Activated T-helper 1 cell treated with anti-CD3 and anti-CD28 coated beads, Interleukin-12 subunit alpha, Interleukin-12 subunit beta, Interleukin-2, Interleukin-4 antibody, amounts not matched to agents 30 ng/mL and 10 ng/mL and 1 ng/mL, durations not matched to agents 14 hours and 24 hours and 36 hours (primary cell): ENCODE measurements at regions of chr3 and their contacts with region 1.

Region 1: GRCh38 chr3:194671900-194672808 is at the start of gene LSG1:
- DNase-seq: peak; percentile 84
- H3K4me3 Mint-ChIP-seq: peak within 1 kb of the TSS; percentile 99
- H3K27ac Mint-ChIP-seq: peak within 1 kb of the TSS; percentile 97
- H3K4me1 Mint-ChIP-seq: peaks cover 68% of the 10 kb centered on the region
- H3K27me3 Mint-ChIP-seq: peaks cover 3% of the 10 kb centered on the region
- total RNA-seq, gene LSG1: 65.1 and 66.3 TPM in 2 replicates

Region 2: GRCh38 chr3:194458131-194458530 is 214.0 kb before region 1 on chr3:
- intact Hi-C with region 1: no loop called
- DNase-seq: no peak
- H3K4me3 Mint-ChIP-seq: no peak overlapping the region
- H3K27ac Mint-ChIP-seq: no peak overlapping the region
- H3K4me1 Mint-ChIP-seq: no peaks in the 10 kb centered on the region
- H3K27me3 Mint-ChIP-seq: no peaks in the 10 kb centered on the region

Region 3: DNA sequence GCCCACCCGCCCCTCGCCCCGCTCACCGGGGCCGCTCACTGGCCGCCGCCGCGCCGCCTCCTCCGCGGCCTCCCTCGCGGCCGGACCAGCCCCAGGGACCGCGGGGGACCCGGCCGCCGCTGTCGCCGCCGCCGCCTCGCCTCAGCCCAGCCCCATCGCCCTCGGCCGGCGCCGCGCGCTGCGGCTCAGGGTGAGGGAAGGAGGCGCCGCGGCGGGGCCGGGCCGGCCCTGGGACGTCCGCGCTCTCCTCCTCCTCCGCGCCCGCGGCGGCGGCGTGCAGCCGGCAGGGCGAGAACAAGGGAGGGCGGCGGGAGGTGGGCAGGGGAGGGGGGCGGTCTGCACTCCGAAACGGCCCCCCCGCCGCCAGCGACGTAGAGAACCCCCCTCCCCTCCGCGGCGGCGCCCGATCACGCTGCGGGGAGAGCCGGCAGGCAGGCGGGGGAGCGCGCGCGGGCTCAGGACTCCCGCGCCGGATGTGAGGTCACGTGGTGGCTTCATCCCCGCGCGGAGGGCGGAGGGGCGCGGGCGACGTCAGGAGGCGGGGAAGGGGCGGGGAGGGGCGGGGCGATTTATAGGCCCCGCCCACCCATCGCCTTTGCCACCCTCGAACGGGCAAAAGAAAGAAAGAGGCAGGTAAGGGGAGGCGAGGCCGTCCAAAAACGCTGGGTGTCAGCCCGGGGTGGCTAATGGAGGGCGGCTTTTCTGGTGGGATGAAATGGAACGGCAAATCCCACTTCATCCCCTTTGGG is 185.4 kb before region 1 on chr3 and contains the start of gene ATP13A3:
- intact Hi-C with region 1: loop called (anchors 5 kb)
- DNase-seq: peak; percentile 87
- H3K4me3 Mint-ChIP-seq: peak within 1 kb of the TSS; percentile 96
- H3K27ac Mint-ChIP-seq: peak within 1 kb of the TSS; percentile 95
- H3K4me1 Mint-ChIP-seq: peaks cover 55% of the 10 kb centered on the region
- H3K27me3 Mint-ChIP-seq: peaks cover 1% of the 10 kb centered on the region
- total RNA-seq, gene ATP13A3: 198 and 206 TPM in 2 replicates

Region 4: DNA sequence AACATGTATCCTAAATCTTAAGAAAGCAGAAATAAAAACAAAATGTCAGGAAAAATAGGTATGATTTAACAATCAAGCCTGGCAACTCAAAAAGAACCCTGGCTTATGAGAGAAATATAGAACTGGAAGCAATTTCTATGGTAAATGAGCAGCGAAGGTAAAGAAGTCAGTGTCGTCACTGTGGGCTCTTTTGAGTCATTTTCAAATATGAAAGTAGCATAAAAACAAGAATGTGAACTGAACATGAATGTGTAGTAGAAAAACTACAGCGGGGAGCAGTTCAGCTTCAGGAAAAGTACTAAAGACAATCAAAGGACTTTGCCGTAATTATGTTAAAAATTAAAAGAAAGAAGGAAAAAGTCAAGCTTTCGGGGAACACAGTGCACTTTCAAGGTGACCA is 17.7 kb before region 1 on chr3:
- intact Hi-C with region 1: loop called (anchors 1 kb)
- DNase-seq: no peak
- H3K4me3 Mint-ChIP-seq: peak overlapping the region; percentile 71
- H3K27ac Mint-ChIP-seq: peak overlapping the region; percentile 94
- H3K4me1 Mint-ChIP-seq: peaks cover 34% of the 10 kb centered on the region
- H3K27me3 Mint-ChIP-seq: no peaks in the 10 kb centered on the region

Region 5: DNA sequence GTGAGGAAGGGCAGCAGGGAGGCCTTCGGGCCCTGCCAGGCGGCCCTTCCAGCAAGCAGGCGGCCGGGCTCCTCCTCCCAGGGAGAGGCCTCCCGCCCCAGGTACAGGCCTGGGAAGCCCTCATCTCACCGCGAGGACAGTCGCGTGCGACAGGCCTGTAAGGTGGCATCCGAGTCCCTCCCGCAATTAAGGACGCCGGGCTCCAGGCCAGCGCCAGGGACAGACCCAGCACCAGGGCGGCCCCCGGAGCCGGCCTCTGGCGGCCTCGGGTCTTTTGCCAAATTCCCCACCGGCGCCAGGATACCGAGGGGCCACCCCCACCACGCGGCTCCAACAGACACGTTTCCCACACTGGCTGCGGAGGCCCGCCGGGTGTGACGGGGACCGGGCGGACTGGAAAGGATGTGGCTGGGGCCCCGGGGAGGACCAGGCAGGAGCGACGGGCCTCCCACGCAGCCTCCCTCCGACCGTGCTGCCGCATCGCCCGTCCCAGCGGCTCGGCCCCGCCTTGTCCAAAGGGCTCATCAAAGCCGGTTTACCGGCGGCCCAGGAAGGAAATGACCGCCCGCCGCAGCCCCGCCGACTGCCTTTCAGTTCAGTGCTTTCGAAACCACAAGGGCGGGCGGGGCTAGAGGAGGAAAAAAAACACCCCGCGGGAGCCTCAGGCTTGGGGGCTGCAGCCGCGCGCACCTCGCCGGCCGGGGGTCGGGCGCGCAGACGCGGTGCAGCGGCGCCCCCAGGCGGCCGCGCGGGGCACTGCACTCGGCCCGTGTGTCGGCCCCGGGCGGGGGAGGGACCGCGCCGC is 587.5 kb after region 1 on chr3:
- intact Hi-C with region 1: loop called (anchors 1 kb)
- DNase-seq: peak; percentile 76
- H3K4me3 Mint-ChIP-seq: peak overlapping the region; percentile 15
- H3K27ac Mint-ChIP-seq: no peak overlapping the region
- H3K4me1 Mint-ChIP-seq: peaks cover 24% of the 10 kb centered on the region
- H3K27me3 Mint-ChIP-seq: no peaks in the 10 kb centered on the region

Region 6: DNA sequence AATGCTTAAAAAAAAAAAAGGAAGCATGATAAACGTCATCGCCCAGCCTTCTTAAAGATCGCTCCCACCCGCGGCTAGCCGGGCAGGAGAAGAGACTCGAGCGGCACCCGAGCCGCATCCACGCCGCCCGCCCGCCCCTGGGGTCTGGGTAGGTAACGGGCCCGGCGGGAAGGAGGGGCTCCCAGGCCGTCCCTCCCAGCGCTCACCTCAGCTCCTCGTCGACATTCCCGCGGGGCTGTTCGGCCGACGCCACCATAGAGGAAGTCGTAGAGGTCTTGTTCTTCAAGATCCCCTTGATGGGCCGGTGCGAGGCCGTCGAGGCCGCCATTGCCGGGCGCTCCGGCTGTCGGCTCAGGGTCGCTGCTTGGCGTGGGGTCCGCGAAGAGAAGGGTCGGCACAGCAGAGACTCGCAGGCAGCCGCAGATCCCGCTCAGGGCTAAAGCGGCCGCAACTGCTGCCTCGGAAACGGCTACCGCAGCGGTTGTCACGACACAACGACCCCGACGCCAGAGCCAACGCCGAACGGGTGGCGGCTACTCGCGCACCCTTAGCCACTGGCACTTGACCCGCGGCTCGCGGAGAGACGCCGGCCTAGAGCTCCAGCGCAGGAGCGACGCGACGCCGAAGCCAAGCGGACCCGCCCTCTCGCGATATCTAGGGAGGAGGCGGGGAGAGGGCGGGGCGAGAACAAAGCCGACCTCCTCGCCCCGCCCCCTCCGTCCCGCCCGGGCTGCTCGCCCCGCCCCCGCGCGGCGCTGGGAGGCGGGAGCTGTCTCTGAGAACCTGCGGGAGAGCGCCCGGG is 870.7 kb after region 1 on chr3 and contains the start of gene PPP1R2:
- intact Hi-C with region 1: loop called (anchors 5 kb)
- DNase-seq: peak; percentile 88
- H3K4me3 Mint-ChIP-seq: peak within 1 kb of the TSS; percentile 88
- H3K27ac Mint-ChIP-seq: peak within 1 kb of the TSS; percentile 82
- H3K4me1 Mint-ChIP-seq: peaks cover 84% of the 10 kb centered on the region
- H3K27me3 Mint-ChIP-seq: no peaks in the 10 kb centered on the region
- total RNA-seq, gene PPP1R2: 98.8 and 106 TPM in 2 replicates